Naive thymus-derived CD4-positive, alpha-beta T cell (primary cell): ENCODE measurements at regions of chr7 and their contacts with region 1.

Region 1: GRCh38 chr7:152759949-152760853 is 649 bp downstream of the ACTR3B start:
- DNase-seq: peak in 5 of 9 donors; percentile 12 to 53 (median 22)
- ATAC-seq: peak; percentile 26
- H3K4me3 ChIP-seq: peak overlapping the region; percentile 68
- H3K4me3 Mint-ChIP-seq: peak overlapping the region; percentile 85 to 94 (median 90)
- H3K27ac ChIP-seq: peak overlapping the region; percentile 93
- H3K27ac Mint-ChIP-seq: peak overlapping the region; percentile 63 to 97 (median 88)
- H3K4me1 ChIP-seq: peaks cover 6 to 11% of the 10 kb centered on the region in 2 donors
- H3K4me1 Mint-ChIP-seq: peaks cover 9 to 27% (median 20%) of the 10 kb centered on the region in 7 donors
- H3K27me3 ChIP-seq: no peaks in the 10 kb centered on the region
- H3K27me3 Mint-ChIP-seq: peaks cover 0 to 3% (median 0%) of the 10 kb centered on the region in 5 donors

Region 2: DNA sequence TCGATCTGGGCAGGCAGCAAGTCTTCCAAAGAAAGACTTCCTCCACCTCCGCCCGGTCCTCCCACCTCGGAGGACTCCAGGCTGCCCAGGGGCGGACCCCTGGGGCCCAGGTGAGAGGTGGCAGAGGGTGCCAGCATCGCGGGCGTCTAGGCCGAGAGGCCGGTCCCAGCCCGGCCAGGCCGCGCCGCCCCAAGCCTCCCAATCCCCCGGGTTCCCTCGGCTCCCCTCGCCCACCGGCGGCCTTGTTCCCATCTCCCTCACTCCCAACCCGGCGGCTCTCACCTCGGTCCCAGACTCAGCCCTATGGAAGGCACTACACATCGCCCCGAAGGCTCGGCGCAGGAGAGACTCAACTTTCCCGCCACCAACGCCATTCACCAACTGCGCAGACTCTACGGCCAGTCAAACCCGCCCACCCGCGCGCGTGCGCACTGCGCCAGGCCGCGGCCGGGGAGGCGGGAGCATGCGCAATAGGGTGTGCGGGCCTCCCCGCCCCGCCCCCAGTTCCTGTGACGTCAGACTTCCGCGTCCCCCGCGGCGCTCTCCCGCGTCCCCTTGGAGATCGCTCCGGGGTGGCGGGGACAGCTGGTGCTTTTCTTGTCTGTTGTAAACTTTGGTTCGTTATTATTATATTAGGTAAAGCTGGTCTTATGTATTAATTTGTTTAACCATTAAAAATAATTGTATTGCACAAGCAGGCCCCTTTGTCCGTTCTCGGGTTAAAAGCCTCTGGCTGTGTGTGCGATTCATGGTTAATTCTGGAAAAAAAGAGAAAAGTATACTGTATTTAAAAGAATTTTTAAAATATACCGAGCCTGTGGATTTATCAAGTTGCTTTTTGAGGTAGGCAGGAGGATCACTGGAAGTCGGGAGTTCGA is 84.2 kb before region 1 on chr7 and contains the start of gene XRCC2:
- CTCF ChIA-PET with region 1: no interaction called
- POLR2A ChIA-PET with region 1: interaction called, 3 read pairs
- intact Hi-C with region 1: loop called (anchors 1 kb)
- DNase-seq: peak; percentile 85 to 100 (median 97)
- ATAC-seq: peak; percentile 95
- H3K4me3 ChIP-seq: peak within 1 kb of the TSS; percentile 91
- H3K4me3 Mint-ChIP-seq: peak within 1 kb of the TSS; percentile 88 to 99 (median 94)
- H3K27ac ChIP-seq: peak within 1 kb of the TSS; percentile 87
- H3K27ac Mint-ChIP-seq: peak within 1 kb of the TSS; percentile 75 to 98 (median 91)
- H3K4me1 ChIP-seq: peaks cover 5 to 8% of the 10 kb centered on the region in 2 donors
- H3K4me1 Mint-ChIP-seq: peaks cover 9 to 22% (median 12%) of the 10 kb centered on the region in 7 donors
- H3K27me3 ChIP-seq: no peaks in the 10 kb centered on the region
- H3K27me3 Mint-ChIP-seq: no peaks in the 10 kb centered on the region
- total RNA-seq, gene XRCC2: 0.48 to 13.8 (median 1.2) TPM

Region 3: DNA sequence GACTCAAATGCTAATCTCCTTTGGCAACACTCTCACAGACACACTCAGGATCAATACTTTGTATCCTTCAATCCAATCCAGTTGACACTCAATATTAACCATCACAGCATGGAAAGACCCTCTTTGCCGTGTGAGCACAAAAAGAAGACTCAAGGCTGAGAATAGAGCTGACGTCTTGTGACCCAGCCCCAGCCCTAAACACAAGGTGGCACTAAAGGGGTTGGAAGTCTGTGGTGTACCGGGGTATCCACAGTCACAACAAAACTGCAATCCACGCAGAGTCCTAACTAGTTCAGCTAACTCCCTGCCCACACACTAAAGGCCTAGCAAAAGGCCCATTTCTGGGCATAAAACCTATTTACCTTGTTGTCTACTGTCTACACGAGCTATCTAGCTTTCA is 199.4 kb after region 1 on chr7:
- CTCF ChIA-PET with region 1: no interaction called
- POLR2A ChIA-PET with region 1: no interaction called
- intact Hi-C with region 1: no loop called
- DNase-seq: no peak
- ATAC-seq: no peak
- H3K4me3 ChIP-seq: no peak overlapping the region
- H3K4me3 Mint-ChIP-seq: no peak overlapping the region
- H3K27ac ChIP-seq: no peak overlapping the region
- H3K27ac Mint-ChIP-seq: no peak overlapping the region
- H3K4me1 ChIP-seq: no peaks in the 10 kb centered on the region
- H3K4me1 Mint-ChIP-seq: no peaks in the 10 kb centered on the region
- H3K27me3 ChIP-seq: no peaks in the 10 kb centered on the region
- H3K27me3 Mint-ChIP-seq: peaks cover 0 to 11% (median 0%) of the 10 kb centered on the region in 5 donors